Activated CD8-positive, alpha-beta T cell treated with anti-CD3 and anti-CD28 coated beads for 36 hours (primary cell): ENCODE measurements at regions of chr1 and their contacts with region 1.

Region 1: DNA sequence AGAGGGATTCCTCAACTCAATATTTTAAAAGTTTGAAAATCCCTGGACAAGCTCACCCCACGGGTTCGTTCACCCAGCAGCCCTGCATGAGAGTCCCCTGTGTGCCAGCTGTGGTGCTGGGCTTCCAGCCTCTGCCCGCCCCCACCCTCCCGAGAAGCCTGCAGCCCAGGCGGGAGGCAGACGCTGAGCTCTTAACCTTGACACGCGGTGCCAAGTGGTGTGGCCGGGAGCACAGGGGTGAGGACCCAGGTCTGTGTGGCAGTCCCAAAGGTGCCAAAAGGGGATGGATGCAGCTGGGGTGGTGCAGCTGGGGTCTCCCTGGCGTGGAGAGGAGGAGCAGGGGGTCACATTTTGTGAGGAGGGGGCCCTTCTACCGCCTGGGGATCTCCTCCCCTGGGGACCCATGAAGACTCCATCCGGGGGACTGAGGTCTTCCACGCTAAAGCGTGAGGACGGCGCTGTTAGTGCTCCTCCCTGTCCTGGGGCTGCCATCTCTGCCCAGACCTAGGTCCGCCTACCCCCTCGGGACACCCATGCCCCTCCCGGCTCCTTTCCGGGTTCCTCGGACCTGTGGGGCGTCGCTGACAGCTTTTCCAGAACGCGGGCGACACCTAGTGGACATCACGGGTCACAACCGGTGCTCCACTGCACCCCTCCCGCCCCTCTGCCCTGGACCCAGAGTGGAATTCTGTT is 12.9 kb downstream of the PLA2G2F start:
- DNase-seq: peak; percentile 81
- ATAC-seq: peak; percentile 98
- H3K4me3 Mint-ChIP-seq: peak overlapping the region; percentile 62
- H3K27ac Mint-ChIP-seq: no peak overlapping the region
- H3K4me1 Mint-ChIP-seq: peaks cover 10% of the 10 kb centered on the region
- H3K27me3 Mint-ChIP-seq: peaks cover 1% of the 10 kb centered on the region
- CTCF ChIP-seq: peak; percentile 97

Region 2: GRCh38 chr1:19882111-19883071 is 269.7 kb before region 1 on chr1 and contains the start of gene OTUD3:
- CTCF ChIA-PET with region 1: interaction called, 13 read pairs
- POLR2A ChIA-PET with region 1: no interaction called
- intact Hi-C with region 1: no loop called
- DNase-seq: peak; percentile 95
- ATAC-seq: peak; percentile 98
- H3K4me3 Mint-ChIP-seq: peak within 1 kb of the TSS; percentile 85
- H3K27ac Mint-ChIP-seq: peak within 1 kb of the TSS; percentile 77
- H3K4me1 Mint-ChIP-seq: peaks cover 34% of the 10 kb centered on the region
- H3K27me3 Mint-ChIP-seq: peaks cover 6% of the 10 kb centered on the region
- CTCF ChIP-seq: peak; percentile 82
- total RNA-seq, gene OTUD3: 7.3 to 8.7 TPM

Region 3: DNA sequence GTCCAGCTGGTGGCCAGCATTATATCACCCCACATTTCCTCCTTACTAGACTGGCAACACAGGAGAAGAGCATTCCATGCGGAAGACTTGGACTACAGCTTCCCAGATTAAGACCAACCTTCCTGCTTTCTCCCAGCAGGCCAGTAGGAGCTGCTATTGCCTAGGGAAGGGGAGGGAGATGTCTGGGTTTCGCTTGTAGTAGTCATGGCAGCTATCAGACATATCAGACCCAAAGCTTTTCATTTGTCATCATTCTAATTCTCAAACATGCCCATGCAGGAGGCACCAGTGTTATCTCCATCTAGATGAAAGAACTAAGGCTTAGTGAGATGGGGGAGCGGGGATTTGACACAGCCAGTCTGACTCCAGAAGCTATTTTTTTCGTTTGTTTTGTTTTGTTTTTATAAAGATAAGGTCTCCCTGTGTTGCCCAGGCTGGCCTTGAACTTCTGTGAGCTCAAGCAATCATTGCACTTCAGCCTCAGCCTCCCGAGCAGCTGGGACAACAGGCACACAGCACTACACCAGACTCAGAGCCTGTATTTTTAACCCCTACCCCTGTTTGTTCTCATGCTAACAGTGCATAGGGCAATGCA is 177.1 kb before region 1 on chr1:
- CTCF ChIA-PET with region 1: interaction called, 14 read pairs
- POLR2A ChIA-PET with region 1: no interaction called
- intact Hi-C with region 1: no loop called
- DNase-seq: peak; percentile 30
- ATAC-seq: peak; percentile 79
- H3K4me3 Mint-ChIP-seq: no peak overlapping the region
- H3K27ac Mint-ChIP-seq: no peak overlapping the region
- H3K4me1 Mint-ChIP-seq: no peaks in the 10 kb centered on the region
- H3K27me3 Mint-ChIP-seq: peaks cover 23% of the 10 kb centered on the region
- CTCF ChIP-seq: peak; percentile 37

Region 4: DNA sequence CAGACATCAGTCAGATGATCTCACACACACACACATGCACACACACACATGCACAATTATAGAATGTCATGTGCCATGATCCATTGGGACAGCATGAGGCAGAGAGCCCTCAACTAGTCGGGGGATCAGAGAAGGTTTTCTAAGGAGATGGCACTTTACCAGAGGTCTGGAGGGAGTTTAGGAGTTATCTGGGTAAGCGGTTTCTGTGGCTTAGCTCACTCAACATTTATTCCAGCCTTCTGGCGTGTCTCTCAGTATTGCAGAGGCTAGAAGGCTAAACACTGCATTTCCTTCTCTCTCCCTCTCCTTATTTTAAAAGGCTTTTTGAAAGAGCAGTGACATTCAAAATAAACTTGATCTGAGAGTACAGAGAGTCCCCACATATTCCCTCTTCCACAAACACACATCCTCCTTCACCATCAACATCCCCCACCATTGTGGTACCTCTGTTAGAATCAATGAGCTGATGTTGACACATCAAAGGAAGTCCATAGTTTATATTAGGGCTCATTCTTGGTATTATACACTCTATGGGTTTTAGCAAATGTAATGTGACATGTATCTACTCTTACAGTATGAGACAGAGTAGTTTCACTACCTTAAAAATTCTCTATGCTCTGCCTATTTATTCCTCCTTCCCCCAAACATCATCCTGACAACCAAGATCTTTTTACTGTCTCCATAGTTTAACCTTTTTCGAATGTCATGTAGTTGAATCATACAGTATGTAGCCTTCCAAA is 163.6 kb before region 1 on chr1:
- CTCF ChIA-PET with region 1: no interaction called
- POLR2A ChIA-PET with region 1: no interaction called
- intact Hi-C with region 1: no loop called
- DNase-seq: no peak
- ATAC-seq: no peak
- H3K4me3 Mint-ChIP-seq: no peak overlapping the region
- H3K27ac Mint-ChIP-seq: no peak overlapping the region
- H3K4me1 Mint-ChIP-seq: no peaks in the 10 kb centered on the region
- H3K27me3 Mint-ChIP-seq: peaks cover 36% of the 10 kb centered on the region
- CTCF ChIP-seq: no peak

Region 5: GRCh38 chr1:20165522-20165951 is 13.5 kb after region 1 on chr1:
- CTCF ChIA-PET with region 1: interaction called, 19 read pairs
- POLR2A ChIA-PET with region 1: interaction called, 3 read pairs
- intact Hi-C with region 1: no loop called
- DNase-seq: peak; percentile 46
- ATAC-seq: peak; percentile 62
- H3K4me3 Mint-ChIP-seq: no peak overlapping the region
- H3K27ac Mint-ChIP-seq: no peak overlapping the region
- H3K4me1 Mint-ChIP-seq: no peaks in the 10 kb centered on the region
- H3K27me3 Mint-ChIP-seq: peaks cover 2% of the 10 kb centered on the region
- CTCF ChIP-seq: peak; percentile 39

Region 6: GRCh38 chr1:20194757-20195461 is 42.9 kb after region 1 on chr1:
- CTCF ChIA-PET with region 1: interaction called, 46 read pairs
- POLR2A ChIA-PET with region 1: interaction called, 3 read pairs
- intact Hi-C with region 1: no loop called
- DNase-seq: peak; percentile 83
- ATAC-seq: peak; percentile 89
- H3K4me3 Mint-ChIP-seq: no peak overlapping the region
- H3K27ac Mint-ChIP-seq: no peak overlapping the region
- H3K4me1 Mint-ChIP-seq: peaks cover 4% of the 10 kb centered on the region
- H3K27me3 Mint-ChIP-seq: peaks cover 38% of the 10 kb centered on the region
- CTCF ChIP-seq: peak; percentile 93